HEK293 (cell line): ENCODE measurements at regions of chr20 and their contacts with region 1.

Region 1: GRCh38 chr20:62136283-62137091 is 6.7 kb downstream of the PSMA7 start:
- H3K4me3 ChIP-seq: no peak overlapping the region
- H3K27ac ChIP-seq: peak overlapping the region; percentile 42; the same call in 1 of the 2 replicates
- H3K4me1 ChIP-seq: no peaks in the 10 kb centered on the region
- CTCF ChIP-seq: peak; percentile 57

Region 2: GRCh38 chr20:62121776-62122631 is 14.5 kb before region 1 on chr20 and contains the start of gene LSM14B:
- CTCF ChIA-PET with region 1: interaction called, 20 read pairs
- POLR2A ChIA-PET with region 1: interaction called, 7 read pairs
- H3K4me3 ChIP-seq: peak within 1 kb of the TSS; percentile 80
- H3K27ac ChIP-seq: peak within 1 kb of the TSS; percentile 85
- H3K4me1 ChIP-seq: no peaks in the 10 kb centered on the region
- CTCF ChIP-seq: no peak